ENCODE measurements at regions of chr1 and their contacts with region 1.

Region 1: GRCh38 chr1:156860113-156860627 is 495 bp upstream of the NTRK1 start:
- DNase-seq: peak; percentile 64
- ATAC-seq: peak; percentile 57
- H3K4me3 Mint-ChIP-seq: peak overlapping the region; percentile 74
- H3K27ac Mint-ChIP-seq: no peak overlapping the region
- H3K4me1 Mint-ChIP-seq: peaks cover 42% of the 10 kb centered on the region
- H3K27me3 Mint-ChIP-seq: peaks cover 58% of the 10 kb centered on the region
- CTCF ChIP-seq: peak; percentile 97

Region 2: GRCh38 chr1:156705918-156706656 is 154.1 kb before region 1 on chr1:
- CTCF ChIA-PET with region 1: interaction called, 11 read pairs
- POLR2A ChIA-PET with region 1: no interaction called
- intact Hi-C with region 1: no loop called
- DNase-seq: peak; percentile 87
- ATAC-seq: peak; percentile 67
- H3K4me3 Mint-ChIP-seq: peak overlapping the region; percentile 75
- H3K27ac Mint-ChIP-seq: peak overlapping the region; percentile 75
- H3K4me1 Mint-ChIP-seq: peaks cover 34% of the 10 kb centered on the region
- H3K27me3 Mint-ChIP-seq: peaks cover 19% of the 10 kb centered on the region
- CTCF ChIP-seq: peak; percentile 99

Region 3: GRCh38 chr1:156781585-156782186 is 78.5 kb before region 1 on chr1:
- CTCF ChIA-PET with region 1: interaction called, 14 read pairs
- POLR2A ChIA-PET with region 1: no interaction called
- intact Hi-C with region 1: no loop called
- DNase-seq: no peak
- ATAC-seq: no peak
- H3K4me3 Mint-ChIP-seq: no peak overlapping the region
- H3K27ac Mint-ChIP-seq: no peak overlapping the region
- H3K4me1 Mint-ChIP-seq: peaks cover 30% of the 10 kb centered on the region
- H3K27me3 Mint-ChIP-seq: no peaks in the 10 kb centered on the region
- CTCF ChIP-seq: no peak

Region 4: GRCh38 chr1:156813750-156814570 is 46.2 kb before region 1 on chr1:
- CTCF ChIA-PET with region 1: interaction called, 121 read pairs
- POLR2A ChIA-PET with region 1: interaction called, 7 read pairs
- intact Hi-C with region 1: loop called (anchors 5 kb)
- DNase-seq: peak; percentile 85
- ATAC-seq: peak; percentile 34
- H3K4me3 Mint-ChIP-seq: peak overlapping the region; percentile 94
- H3K27ac Mint-ChIP-seq: peak overlapping the region; percentile 99
- H3K4me1 Mint-ChIP-seq: peaks cover 58% of the 10 kb centered on the region
- H3K27me3 Mint-ChIP-seq: no peaks in the 10 kb centered on the region
- CTCF ChIP-seq: peak; percentile 44

Region 5: DNA sequence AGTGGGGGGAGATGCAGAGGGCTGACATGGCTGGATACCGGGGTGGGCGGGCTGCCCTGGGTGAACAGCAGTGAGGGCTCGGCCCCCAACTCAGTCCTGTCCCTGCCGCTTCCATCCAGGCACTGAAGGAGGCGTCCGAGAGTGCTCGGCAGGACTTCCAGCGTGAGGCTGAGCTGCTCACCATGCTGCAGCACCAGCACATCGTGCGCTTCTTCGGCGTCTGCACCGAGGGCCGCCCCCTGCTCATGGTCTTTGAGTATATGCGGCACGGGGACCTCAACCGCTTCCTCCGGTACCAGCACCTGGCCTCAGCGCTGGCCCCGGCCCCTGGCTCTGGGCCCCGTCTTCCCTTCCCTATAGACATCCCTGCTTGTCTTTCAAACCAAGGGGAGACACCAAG is 16.1 kb after region 1 on chr1:
- CTCF ChIA-PET with region 1: interaction called, 19 read pairs
- POLR2A ChIA-PET with region 1: interaction called, 3 read pairs
- intact Hi-C with region 1: no loop called
- DNase-seq: no peak
- ATAC-seq: no peak
- H3K4me3 Mint-ChIP-seq: no peak overlapping the region
- H3K27ac Mint-ChIP-seq: no peak overlapping the region
- H3K4me1 Mint-ChIP-seq: no peaks in the 10 kb centered on the region
- H3K27me3 Mint-ChIP-seq: peaks cover 5% of the 10 kb centered on the region
- CTCF ChIP-seq: no peak

Region 6: GRCh38 chr1:156927215-156928042 is 67.3 kb after region 1 on chr1:
- CTCF ChIA-PET with region 1: interaction called, 14 read pairs
- POLR2A ChIA-PET with region 1: no interaction called
- intact Hi-C with region 1: no loop called
- DNase-seq: peak; percentile 83
- ATAC-seq: peak; percentile 70
- H3K4me3 Mint-ChIP-seq: peak overlapping the region; percentile 41
- H3K27ac Mint-ChIP-seq: no peak overlapping the region
- H3K4me1 Mint-ChIP-seq: peaks cover 32% of the 10 kb centered on the region
- H3K27me3 Mint-ChIP-seq: peaks cover 77% of the 10 kb centered on the region
- CTCF ChIP-seq: peak; percentile 78

Region 7: GRCh38 chr1:157019457-157019856 is 159.3 kb after region 1 on chr1:
- CTCF ChIA-PET with region 1: no interaction called
- POLR2A ChIA-PET with region 1: no interaction called
- intact Hi-C with region 1: no loop called
- DNase-seq: no peak
- ATAC-seq: no peak
- H3K4me3 Mint-ChIP-seq: no peak overlapping the region
- H3K27ac Mint-ChIP-seq: no peak overlapping the region
- H3K4me1 Mint-ChIP-seq: no peaks in the 10 kb centered on the region
- H3K27me3 Mint-ChIP-seq: peaks cover 14% of the 10 kb centered on the region
- CTCF ChIP-seq: no peak

Measured in activated CD8-positive, alpha-beta T cell treated with anti-CD3 and anti-CD28 coated beads for 36 hours (primary cell).